H1 (cell line): ENCODE measurements at regions of chr5 and their contacts with region 1.

Region 1: DNA sequence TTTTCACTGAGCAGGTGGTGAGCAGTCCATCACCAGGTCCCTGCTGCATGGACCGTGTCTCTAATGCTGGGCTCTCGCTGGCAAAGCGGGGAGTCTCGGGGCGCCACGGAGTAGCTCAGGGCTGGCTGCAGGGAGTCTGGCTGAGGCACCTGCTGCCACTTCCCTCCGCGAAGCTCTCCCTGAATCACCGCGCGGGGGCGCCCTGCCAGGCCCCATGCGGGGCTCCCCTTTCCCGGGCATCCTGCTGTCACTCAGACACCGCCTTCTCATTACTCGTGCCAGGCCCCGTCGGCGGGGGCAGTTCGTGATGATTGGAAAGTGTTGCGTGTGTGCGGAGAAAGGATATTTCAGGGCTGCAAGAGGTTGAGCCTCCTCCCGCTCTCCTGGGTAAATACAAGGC is 335.8 kb downstream of the IRX2 start:
- DNase-seq: peak in 1 of 2 experiments; percentile 69
- H3K4me3 ChIP-seq: no peak overlapping the region
- H3K27ac ChIP-seq: no peak overlapping the region
- H3K4me1 ChIP-seq: no peaks in the 10 kb centered on the region; a peak in 1 of 7 replicates
- H3K27me3 ChIP-seq: no peaks in the 10 kb centered on the region
- CTCF ChIP-seq: peak; percentile 50 to 53 (median 50)
- EP300 ChIP-seq: no peak
- POLR2A ChIP-seq: no peak
- RAD21 ChIP-seq: peak; percentile 51 to 61; a peak in 3 of 4 replicates

Region 2: GRCh38 chr5:2430606-2431005 is 14.9 kb after region 1 on chr5:
- CTCF ChIA-PET with region 1: interaction called, 14 read pairs
- POLR2A ChIA-PET with region 1: no interaction called
- DNase-seq: no peak
- H3K4me3 ChIP-seq: no peak overlapping the region
- H3K27ac ChIP-seq: no peak overlapping the region
- H3K4me1 ChIP-seq: no peaks in the 10 kb centered on the region
- H3K27me3 ChIP-seq: no peaks in the 10 kb centered on the region
- CTCF ChIP-seq: no peak
- EP300 ChIP-seq: no peak
- POLR2A ChIP-seq: no peak
- RAD21 ChIP-seq: no peak